ENCODE measurements at regions of chr10 and their contacts with region 1.

Region 1: GRCh38 chr10:102420810-102421644 is at the start of gene FBXL15:
- DNase-seq: peak; percentile 92 to 94 (median 93)
- H3K4me3 ChIP-seq: peak within 1 kb of the TSS; percentile 61 to 90
- H3K4me3 Mint-ChIP-seq: peak within 1 kb of the TSS; percentile 90 to 99 (median 96)
- H3K27ac ChIP-seq: peak within 1 kb of the TSS; percentile 64
- H3K27ac Mint-ChIP-seq: peak within 1 kb of the TSS; percentile 92 to 98 (median 96)
- H3K4me1 ChIP-seq: peaks cover 37% of the 10 kb centered on the region
- H3K4me1 Mint-ChIP-seq: peaks cover 17 to 53% (median 33%) of the 10 kb centered on the region in 4 donors
- H3K27me3 ChIP-seq: peaks cover 9% of the 10 kb centered on the region
- H3K27me3 Mint-ChIP-seq: peaks cover 10 to 16% of the 10 kb centered on the region in 2 donors
- total RNA-seq, gene FBXL15: 21.1 to 24.1 TPM

Region 2: DNA sequence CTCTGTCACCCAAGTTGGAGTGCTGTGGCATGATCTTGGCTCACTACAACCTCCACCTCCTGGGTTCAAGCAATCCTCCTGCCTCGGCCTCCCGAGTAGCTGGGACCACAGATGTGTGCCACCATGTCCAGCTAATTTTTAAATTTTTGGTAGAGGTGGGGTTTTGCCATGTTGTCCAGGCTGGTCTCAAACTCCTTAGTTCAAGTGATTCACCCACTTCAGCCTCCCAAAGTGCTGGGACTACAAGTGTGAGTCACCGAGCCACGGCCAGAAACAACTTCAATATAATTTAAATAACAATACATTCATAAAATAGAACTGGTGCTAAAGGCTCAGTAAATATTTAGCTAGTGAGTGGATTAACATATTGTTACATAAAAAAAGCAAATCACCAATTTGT is 289.3 kb before region 1 on chr10:
- CTCF ChIA-PET with region 1: no interaction called
- POLR2A ChIA-PET with region 1: no interaction called
- intact Hi-C with region 1: no loop called
- DNase-seq: no peak
- H3K4me3 ChIP-seq: no peak overlapping the region
- H3K4me3 Mint-ChIP-seq: no peak overlapping the region
- H3K27ac ChIP-seq: peak overlapping the region; percentile 88
- H3K27ac Mint-ChIP-seq: peak overlapping the region in 4 of 7 donors; percentile 92 to 99 (median 96)
- H3K4me1 ChIP-seq: peaks cover 34% of the 10 kb centered on the region
- H3K4me1 Mint-ChIP-seq: peaks cover 26 to 43% (median 34%) of the 10 kb centered on the region in 4 donors
- H3K27me3 ChIP-seq: no peaks in the 10 kb centered on the region
- H3K27me3 Mint-ChIP-seq: no peaks in the 10 kb centered on the region

Region 3: GRCh38 chr10:102399217-102400089 is 21.6 kb before region 1 on chr10:
- CTCF ChIA-PET with region 1: interaction called, 36 read pairs
- POLR2A ChIA-PET with region 1: interaction called, 122 read pairs
- intact Hi-C with region 1: loop called (anchors 1 kb)
- DNase-seq: peak; percentile 86 to 90 (median 87)
- H3K4me3 ChIP-seq: peak overlapping the region in 1 of 2 donors; percentile 49
- H3K4me3 Mint-ChIP-seq: peak overlapping the region; percentile 53 to 81 (median 74)
- H3K27ac ChIP-seq: peak overlapping the region; percentile 100
- H3K27ac Mint-ChIP-seq: peak overlapping the region; percentile 89 to 100 (median 100)
- H3K4me1 ChIP-seq: peaks cover 44% of the 10 kb centered on the region
- H3K4me1 Mint-ChIP-seq: peaks cover 19 to 68% (median 32%) of the 10 kb centered on the region in 4 donors
- H3K27me3 ChIP-seq: no peaks in the 10 kb centered on the region
- H3K27me3 Mint-ChIP-seq: no peaks in the 10 kb centered on the region

Region 4: DNA sequence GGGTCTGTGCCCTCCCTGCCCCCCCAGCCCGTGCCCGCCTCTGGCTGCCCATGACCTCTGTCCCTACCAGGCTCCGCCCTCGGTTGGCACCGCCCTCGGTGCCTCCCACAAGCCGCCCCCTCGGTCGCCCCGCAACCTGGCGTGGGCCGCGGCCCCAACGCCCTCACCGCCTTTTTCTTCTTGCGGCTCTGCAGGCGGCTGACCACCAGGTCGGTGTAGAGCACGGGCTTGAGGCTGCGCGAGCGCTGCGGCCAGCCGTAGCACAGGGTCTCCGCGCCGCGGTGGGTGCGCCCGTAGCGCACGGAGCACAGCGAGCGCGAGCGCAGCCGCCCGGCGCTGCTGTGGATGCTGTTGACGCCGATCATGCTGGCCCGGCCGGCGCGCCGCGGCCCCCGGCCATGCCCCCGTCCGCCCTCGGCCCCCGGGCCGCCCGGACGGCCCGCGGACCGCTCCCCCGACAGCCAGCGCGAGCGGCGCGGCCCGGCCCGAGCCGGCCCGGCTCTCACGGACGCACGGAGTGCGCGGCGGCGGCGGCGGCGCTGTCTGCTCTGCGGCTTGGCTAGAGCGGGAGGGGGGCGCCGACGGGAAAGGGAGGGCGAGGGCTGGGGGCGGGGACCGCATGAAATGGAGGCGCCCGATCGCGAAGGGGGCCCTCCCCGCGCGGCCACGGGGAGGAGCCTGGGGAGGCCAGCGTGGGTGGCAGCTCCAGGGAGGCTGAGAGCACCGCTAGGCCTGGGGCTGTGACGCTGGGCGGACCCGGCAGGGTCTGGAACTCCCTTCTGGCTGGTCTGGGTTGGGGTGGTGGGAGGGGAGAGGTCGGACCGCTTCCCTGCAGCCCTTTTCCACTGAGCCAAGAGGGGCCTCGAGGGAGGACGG is 12.1 kb before region 1 on chr10:
- CTCF ChIA-PET with region 1: interaction called, 4 read pairs
- POLR2A ChIA-PET with region 1: interaction called, 23 read pairs
- intact Hi-C with region 1: no loop called
- DNase-seq: peak; percentile 53 to 76 (median 64)
- H3K4me3 ChIP-seq: peak overlapping the region in 1 of 2 donors; percentile 43
- H3K4me3 Mint-ChIP-seq: peak overlapping the region; percentile 63 to 88 (median 80)
- H3K27ac ChIP-seq: peak overlapping the region; percentile 22
- H3K27ac Mint-ChIP-seq: peak overlapping the region in 3 of 7 donors; percentile 54 to 95 (median 72)
- H3K4me1 ChIP-seq: peaks cover 27% of the 10 kb centered on the region
- H3K4me1 Mint-ChIP-seq: peaks cover 14 to 65% (median 22%) of the 10 kb centered on the region in 4 donors
- H3K27me3 ChIP-seq: peaks cover 11% of the 10 kb centered on the region
- H3K27me3 Mint-ChIP-seq: peaks cover 16 to 33% of the 10 kb centered on the region in 2 donors

Region 5: GRCh38 chr10:102432162-102432950 is 11.3 kb after region 1 on chr10 and contains the start of gene CUEDC2:
- CTCF ChIA-PET with region 1: interaction called, 42 read pairs
- POLR2A ChIA-PET with region 1: interaction called, 198 read pairs
- intact Hi-C with region 1: loop called (anchors 1 kb)
- DNase-seq: peak; percentile 89 to 95 (median 93)
- H3K4me3 ChIP-seq: peak within 1 kb of the TSS; percentile 83 to 92
- H3K4me3 Mint-ChIP-seq: peak within 1 kb of the TSS; percentile 90 to 95 (median 94)
- H3K27ac ChIP-seq: peak within 1 kb of the TSS; percentile 79
- H3K27ac Mint-ChIP-seq: peak within 1 kb of the TSS; percentile 84 to 98 (median 97)
- H3K4me1 ChIP-seq: peaks cover 52% of the 10 kb centered on the region
- H3K4me1 Mint-ChIP-seq: peaks cover 24 to 57% (median 40%) of the 10 kb centered on the region in 4 donors
- H3K27me3 ChIP-seq: no peaks in the 10 kb centered on the region
- H3K27me3 Mint-ChIP-seq: no peaks in the 10 kb centered on the region
- total RNA-seq, gene CUEDC2: 27.2 to 30.8 TPM

Region 6: DNA sequence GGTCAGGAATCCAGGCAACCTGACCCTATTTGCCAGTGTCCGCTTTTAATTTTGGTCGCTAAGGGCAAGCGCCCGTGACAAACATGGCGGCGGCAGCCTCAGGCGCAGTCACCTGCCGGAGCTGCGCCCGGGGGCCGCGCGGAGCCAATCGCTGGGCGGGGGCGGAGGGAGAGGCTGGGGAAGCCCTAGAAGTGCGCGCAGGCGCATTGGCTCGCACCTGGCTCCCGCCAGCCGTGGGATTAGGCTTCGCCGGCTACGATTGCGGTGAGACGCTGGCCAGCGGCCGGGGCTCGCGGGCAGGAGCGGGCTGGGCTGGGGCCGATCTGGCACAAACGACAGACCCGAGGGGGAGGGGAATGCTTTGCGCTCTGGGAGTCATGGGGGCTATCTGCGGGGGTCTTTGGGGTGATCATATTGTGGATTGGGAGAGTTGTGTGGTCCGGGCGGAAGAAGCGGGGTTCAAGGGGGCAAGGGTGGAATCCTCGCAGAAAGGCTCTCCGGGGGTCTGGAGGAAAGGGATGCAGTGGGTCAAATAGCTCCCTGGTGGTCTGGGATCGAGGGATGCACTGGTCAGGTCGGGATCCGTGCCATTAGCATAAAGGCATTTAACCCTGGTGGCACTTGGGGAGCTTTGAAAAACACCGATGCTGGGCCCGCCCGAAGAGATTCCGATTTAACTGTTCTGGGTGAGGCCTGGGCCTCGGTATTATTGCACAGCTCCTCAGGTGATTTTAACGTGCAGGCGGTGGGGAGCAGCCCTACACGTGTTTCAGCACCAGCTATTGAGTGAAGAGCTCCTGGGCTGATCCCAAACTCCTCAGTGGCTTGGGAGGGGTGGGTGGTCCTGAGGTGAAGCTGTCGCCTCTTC is 40.4 kb after region 1 on chr10:
- CTCF ChIA-PET with region 1: interaction called, 10 read pairs
- POLR2A ChIA-PET with region 1: interaction called, 22 read pairs
- intact Hi-C with region 1: loop called (anchors 1 kb)
- DNase-seq: peak; percentile 90 to 91 (median 91)
- H3K4me3 ChIP-seq: peak overlapping the region; percentile 52 to 85
- H3K4me3 Mint-ChIP-seq: peak overlapping the region; percentile 83 to 95 (median 90)
- H3K27ac ChIP-seq: peak overlapping the region; percentile 70
- H3K27ac Mint-ChIP-seq: peak overlapping the region; percentile 75 to 95 (median 87)
- H3K4me1 ChIP-seq: peaks cover 16% of the 10 kb centered on the region
- H3K4me1 Mint-ChIP-seq: peaks cover 16 to 38% (median 23%) of the 10 kb centered on the region in 4 donors
- H3K27me3 ChIP-seq: no peaks in the 10 kb centered on the region
- H3K27me3 Mint-ChIP-seq: no peaks in the 10 kb centered on the region

Measured in CD4-positive, alpha-beta memory T cell (primary cell).